ENCODE measurements at regions of chr9 and their contacts with region 1.

Region 1: GRCh38 chr9:89549031-89549644 is 51.2 kb upstream of the SEMA4D start:
- DNase-seq: peak; percentile 89
- CTCF ChIP-seq: peak; percentile 95

Region 2: DNA sequence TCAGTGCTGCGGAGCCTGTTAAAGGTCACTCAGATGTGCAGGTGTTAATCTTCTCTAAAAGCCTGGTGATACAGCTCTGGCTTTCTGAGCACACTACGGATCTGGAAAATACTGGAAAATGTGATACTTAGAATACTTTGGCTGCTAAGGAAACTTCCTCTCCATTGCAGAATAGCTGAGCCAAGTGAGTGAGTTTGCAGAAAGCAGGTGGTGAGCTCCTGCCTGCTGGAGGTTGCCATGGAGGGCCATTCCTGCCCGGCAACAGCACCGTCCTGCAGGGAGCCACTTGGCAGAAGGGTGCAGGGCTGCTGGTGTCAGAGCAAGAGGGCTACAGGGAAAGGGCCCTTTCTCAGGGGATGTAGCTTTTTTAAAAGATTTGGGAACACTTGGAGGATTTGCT is 190.2 kb before region 1 on chr9:
- CTCF ChIA-PET with region 1: interaction called, 10 read pairs
- POLR2A ChIA-PET with region 1: no interaction called
- DNase-seq: no peak
- CTCF ChIP-seq: no peak

Region 3: GRCh38 chr9:89400403-89401116 is 148.6 kb before region 1 on chr9:
- CTCF ChIA-PET with region 1: interaction called, 28 read pairs
- POLR2A ChIA-PET with region 1: no interaction called
- DNase-seq: peak; percentile 72
- CTCF ChIP-seq: no peak

Region 4: DNA sequence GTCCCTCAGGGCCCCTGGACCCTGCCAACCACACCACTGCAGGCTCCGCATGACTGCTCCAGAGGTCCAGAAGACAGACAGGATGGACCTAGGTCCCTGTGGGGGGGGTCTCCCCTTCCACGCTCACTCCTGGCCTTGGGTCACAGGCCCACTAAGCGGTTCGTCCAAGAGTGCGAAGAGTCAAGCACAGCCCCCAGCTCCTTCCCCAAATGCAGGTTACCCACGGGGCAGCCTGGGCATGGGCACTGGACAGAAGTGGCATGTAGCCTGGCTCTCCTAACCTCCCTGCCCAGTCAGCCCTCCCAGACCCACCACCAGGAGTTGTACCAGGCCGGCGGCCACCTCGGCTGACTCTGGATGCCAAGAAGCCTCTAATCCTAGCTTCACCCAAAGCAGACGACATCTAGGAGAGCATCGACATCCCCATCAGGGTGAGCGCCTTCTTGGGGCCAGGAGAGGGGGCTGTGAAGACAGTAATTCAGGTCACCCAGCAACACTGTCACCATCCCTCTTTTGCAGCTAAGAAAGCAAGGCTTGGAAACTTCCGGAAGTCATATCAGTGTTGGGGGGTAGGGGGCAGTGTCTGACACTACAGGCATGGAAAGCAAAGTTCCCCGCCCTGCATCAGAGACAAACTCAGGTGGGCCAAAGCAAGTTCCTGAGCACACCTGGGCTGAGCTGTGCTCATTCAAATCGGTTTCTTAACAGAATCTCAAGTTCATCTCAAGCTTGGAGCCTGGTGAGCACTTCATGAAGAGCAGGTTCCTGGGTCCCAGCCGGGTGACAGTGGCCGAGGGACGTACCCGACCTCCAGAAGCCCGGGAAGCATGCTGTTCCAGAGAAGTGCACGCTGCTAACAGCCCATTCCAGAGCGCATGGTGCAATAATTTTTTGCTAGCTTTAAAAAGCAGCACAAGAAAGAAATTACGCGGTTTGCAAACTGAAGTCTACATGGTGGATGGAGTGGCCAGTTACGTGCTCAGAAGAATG is 119.9 kb before region 1 on chr9:
- CTCF ChIA-PET with region 1: interaction called, 81 read pairs
- POLR2A ChIA-PET with region 1: no interaction called
- DNase-seq: peak; percentile 64
- CTCF ChIP-seq: peak; percentile 56

Region 5: DNA sequence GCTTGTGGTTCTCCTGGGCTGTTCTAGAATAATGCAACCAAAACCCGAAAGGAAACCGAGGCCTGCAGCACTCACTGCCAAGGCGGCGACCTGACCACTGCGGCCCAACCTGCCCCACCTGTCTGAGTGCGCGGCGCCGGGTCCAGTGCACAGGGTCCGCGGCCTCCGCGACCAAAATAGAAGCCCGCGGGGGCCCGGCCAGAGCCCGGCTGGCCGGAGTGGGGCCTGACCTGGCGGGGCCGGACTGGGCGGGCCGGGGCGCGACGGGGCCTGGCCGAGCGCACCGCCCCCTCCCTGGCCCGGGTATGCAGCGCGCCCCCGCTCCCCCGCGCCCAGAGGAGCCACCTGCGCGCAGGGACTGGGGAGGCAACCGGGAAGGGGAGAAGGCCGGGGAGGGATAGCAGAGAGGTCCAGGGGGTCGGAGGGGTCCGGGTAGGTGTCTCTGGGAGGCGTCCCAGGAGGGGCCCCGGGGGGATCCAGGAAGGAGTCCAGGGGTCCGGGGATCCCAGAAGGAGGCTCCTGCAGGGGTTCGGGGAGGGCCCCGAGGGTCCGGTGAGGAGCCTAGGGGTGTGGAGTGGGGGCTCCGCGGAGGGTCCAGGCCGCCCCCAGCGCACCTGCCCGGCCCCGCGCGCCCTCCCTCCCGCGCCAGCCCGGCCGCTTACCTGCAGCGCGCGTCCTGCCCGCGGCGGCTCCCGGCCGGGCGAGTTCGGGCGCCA is 51.7 kb before region 1 on chr9:
- CTCF ChIA-PET with region 1: interaction called, 12 read pairs
- POLR2A ChIA-PET with region 1: no interaction called
- DNase-seq: peak; percentile 43
- CTCF ChIP-seq: no peak

Region 6: GRCh38 chr9:89529243-89530035 is 19.7 kb before region 1 on chr9:
- CTCF ChIA-PET with region 1: interaction called, 45 read pairs
- POLR2A ChIA-PET with region 1: no interaction called
- DNase-seq: no peak
- CTCF ChIP-seq: no peak

Region 7: DNA sequence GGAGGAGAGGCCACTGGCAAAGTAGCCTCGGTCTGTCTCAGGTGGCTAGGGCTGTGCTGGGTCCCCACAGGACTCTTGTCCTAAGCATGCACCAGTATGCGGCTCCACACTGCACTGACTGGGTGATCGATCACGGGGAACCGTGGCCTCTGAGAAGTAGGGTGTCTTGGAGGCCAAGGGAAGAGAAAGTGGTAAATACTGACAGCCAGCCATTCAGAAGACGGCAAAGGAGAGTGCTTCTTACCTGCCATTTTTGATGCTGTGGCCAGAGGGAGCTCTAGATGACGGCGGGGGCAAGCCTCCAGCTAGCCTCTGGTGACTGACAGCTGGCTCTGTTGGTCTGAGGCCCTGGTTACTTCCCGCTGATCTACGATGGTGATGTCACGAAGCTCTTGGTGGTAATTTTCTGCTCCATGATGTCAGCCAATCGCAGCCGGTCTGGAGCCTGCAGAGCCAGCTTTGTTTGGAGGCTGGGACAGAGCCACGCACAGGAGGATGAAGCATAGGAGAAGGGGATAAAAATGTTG is 15.3 kb after region 1 on chr9:
- CTCF ChIA-PET with region 1: interaction called, 45 read pairs
- POLR2A ChIA-PET with region 1: no interaction called
- DNase-seq: peak; percentile 87
- CTCF ChIP-seq: peak; percentile 37

Region 8: GRCh38 chr9:89839449-89839848 is 290.3 kb after region 1 on chr9:
- CTCF ChIA-PET with region 1: no interaction called
- POLR2A ChIA-PET with region 1: no interaction called
- DNase-seq: no peak
- CTCF ChIP-seq: no peak

Measured in GM10248 (cell line).